ENCODE measurements at regions of chr19 and their contacts with region 1.

Region 1: GRCh38 chr19:3984908-3985642 is at the start of gene EEF2:
- DNase-seq: peak in 1 of 2 experiments; percentile 93
- H3K4me3 ChIP-seq: peak within 1 kb of the TSS; percentile 79 to 99 (median 98)
- H3K27ac ChIP-seq: peak within 1 kb of the TSS; percentile 84
- H3K4me1 ChIP-seq: peaks cover 2 to 16% (median 10%) of the 10 kb centered on the region in 4 experiments
- H3K27me3 ChIP-seq: no peaks in the 10 kb centered on the region
- CTCF ChIP-seq: no peak; a peak in 1 of 4 replicates
- EP300 ChIP-seq: peak in 1 of 2 experiments; percentile 24; a peak in 1 of 3 replicates
- POLR2A ChIP-seq: peak; percentile 100
- RAD21 ChIP-seq: no peak
- total RNA-seq, gene EEF2: 3,380 and 3,443 TPM in 2 replicates

Region 2: GRCh38 chr19:3880471-3881271 is 104.4 kb before region 1 on chr19 and contains the start of gene ATCAY:
- CTCF ChIA-PET with region 1: no interaction called
- POLR2A ChIA-PET with region 1: interaction called, 15 read pairs
- DNase-seq: peak in 1 of 2 experiments; percentile 71
- H3K4me3 ChIP-seq: peak within 1 kb of the TSS; percentile 55 to 79 (median 75)
- H3K27ac ChIP-seq: no peak within 1 kb of the TSS
- H3K4me1 ChIP-seq: peaks cover 0 to 4% (median 0%) of the 10 kb centered on the region in 4 experiments; a peak in 2 of 7 replicates
- H3K27me3 ChIP-seq: no peaks in the 10 kb centered on the region; a peak in 1 of 7 replicates
- CTCF ChIP-seq: no peak
- EP300 ChIP-seq: no peak
- POLR2A ChIP-seq: peak in 1 of 2 experiments; percentile 76; a peak in 1 of 3 replicates
- RAD21 ChIP-seq: no peak
- total RNA-seq, gene ATCAY: 31.6 and 33.8 TPM in 2 replicates

Region 3: GRCh38 chr19:3970808-3971598 is 14.1 kb before region 1 on chr19 and contains the start of gene DAPK3:
- CTCF ChIA-PET with region 1: interaction called, 10 read pairs
- POLR2A ChIA-PET with region 1: interaction called, 870 read pairs
- DNase-seq: peak; percentile 97 to 98
- H3K4me3 ChIP-seq: peak within 1 kb of the TSS; percentile 69 to 92 (median 75)
- H3K27ac ChIP-seq: peak within 1 kb of the TSS; percentile 78; the same call in 1 of the 2 replicates
- H3K4me1 ChIP-seq: peaks cover 2 to 14% (median 6%) of the 10 kb centered on the region in 4 experiments; a peak in 6 of 7 replicates
- H3K27me3 ChIP-seq: no peaks in the 10 kb centered on the region
- CTCF ChIP-seq: no peak
- EP300 ChIP-seq: no peak
- POLR2A ChIP-seq: peak; percentile 37 to 82
- RAD21 ChIP-seq: no peak
- total RNA-seq, gene DAPK3: 78.1 and 80.8 TPM in 2 replicates

Region 4: DNA sequence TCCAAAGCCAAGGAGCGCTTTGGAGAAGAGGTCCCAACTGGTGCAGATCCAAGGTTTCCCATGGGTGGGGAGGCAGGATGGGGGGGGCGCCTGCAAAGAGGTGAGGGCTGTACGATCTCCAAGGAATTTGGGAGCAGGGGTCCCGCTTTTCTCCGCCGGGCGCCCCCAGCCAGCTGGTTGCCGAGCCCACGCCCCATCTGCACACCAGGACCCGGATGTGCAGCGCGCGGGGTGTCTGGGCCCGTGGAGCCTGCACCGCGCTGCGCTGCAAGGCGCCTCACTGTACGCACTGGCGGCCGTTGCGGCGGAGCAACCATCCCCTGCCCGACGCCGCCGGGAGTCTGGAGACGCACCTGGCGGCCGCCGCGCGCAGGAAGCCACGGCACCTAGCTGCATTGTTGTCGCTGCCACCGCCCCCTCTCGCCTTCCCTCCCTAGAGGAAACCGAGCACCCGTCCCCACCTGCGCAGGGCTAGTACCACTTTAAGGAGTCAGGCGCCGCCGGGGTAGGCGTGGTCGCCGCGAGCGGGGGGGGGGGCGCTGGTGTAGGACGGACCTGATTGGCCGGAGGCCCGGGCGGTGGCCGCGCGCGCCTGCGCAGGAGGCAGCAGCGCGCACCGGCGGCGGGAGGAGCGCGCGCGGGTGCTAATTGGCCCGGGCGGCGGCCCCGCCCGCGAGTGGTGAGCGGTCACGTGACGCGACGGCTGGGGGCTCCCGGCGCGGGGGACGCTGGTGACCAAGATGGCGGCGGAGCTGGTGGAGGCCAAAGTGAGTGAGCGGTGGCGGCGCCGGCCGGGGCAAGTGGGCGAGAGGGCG is 22.2 kb after region 1 on chr19 and contains the start of gene PIAS4:
- CTCF ChIA-PET with region 1: interaction called, 21 read pairs
- POLR2A ChIA-PET with region 1: interaction called, 125 read pairs
- DNase-seq: peak; percentile 85 to 93
- H3K4me3 ChIP-seq: peak within 1 kb of the TSS; percentile 69 to 99 (median 92)
- H3K27ac ChIP-seq: peak within 1 kb of the TSS; percentile 83; the same call in 1 of the 2 replicates
- H3K4me1 ChIP-seq: peaks cover 2 to 12% (median 5%) of the 10 kb centered on the region in 4 experiments
- H3K27me3 ChIP-seq: no peaks in the 10 kb centered on the region
- CTCF ChIP-seq: no peak
- EP300 ChIP-seq: peak in 1 of 2 experiments; percentile 16; a peak in 1 of 3 replicates
- POLR2A ChIP-seq: peak in 1 of 2 experiments; percentile 75; a peak in 1 of 3 replicates
- RAD21 ChIP-seq: no peak; a peak in 1 of 4 replicates
- total RNA-seq, gene PIAS4: 41.4 and 51.4 TPM in 2 replicates

Region 5: DNA sequence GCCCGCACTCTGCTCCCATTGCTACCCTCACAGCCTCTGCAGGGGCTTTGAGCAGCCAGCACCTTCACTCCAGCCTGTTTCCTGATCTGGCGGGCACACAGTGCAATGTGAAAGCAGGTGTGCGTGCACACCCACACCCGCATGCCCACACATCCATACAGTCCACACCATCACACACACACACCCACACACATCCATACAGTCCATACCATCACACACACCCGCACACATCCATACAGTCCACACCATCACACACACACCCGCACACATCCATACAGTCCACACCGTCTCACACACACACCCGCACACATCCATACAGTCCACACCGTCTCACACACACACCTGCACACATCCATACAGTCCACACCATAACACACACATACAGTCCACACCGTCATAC is 50.5 kb after region 1 on chr19:
- CTCF ChIA-PET with region 1: no interaction called
- POLR2A ChIA-PET with region 1: interaction called, 11 read pairs
- DNase-seq: no peak
- H3K4me3 ChIP-seq: no peak overlapping the region
- H3K27ac ChIP-seq: no peak overlapping the region
- H3K4me1 ChIP-seq: no peaks in the 10 kb centered on the region
- H3K27me3 ChIP-seq: no peaks in the 10 kb centered on the region
- CTCF ChIP-seq: no peak
- EP300 ChIP-seq: no peak
- POLR2A ChIP-seq: no peak
- RAD21 ChIP-seq: no peak

Region 6: DNA sequence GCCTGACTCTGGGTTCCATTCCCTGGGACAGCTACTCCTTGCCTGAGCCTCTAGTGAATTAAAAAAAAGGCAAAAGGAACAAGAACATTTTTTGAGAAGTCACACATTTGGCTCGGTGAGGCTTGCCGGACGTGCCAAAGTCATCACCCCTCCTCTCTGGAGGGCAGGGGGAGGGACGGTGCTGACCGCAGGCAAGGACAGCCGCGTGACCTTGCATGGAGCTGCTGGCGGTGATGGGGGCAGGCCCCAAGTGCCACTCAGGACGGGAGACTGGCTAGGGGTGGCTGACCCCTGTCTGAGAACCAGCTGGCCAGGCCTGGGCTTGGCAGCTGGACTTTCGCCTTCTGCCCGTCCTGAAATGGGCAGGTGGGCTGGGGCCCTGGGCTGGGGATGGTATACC is 112.4 kb after region 1 on chr19:
- CTCF ChIA-PET with region 1: no interaction called
- POLR2A ChIA-PET with region 1: interaction called, 12 read pairs
- DNase-seq: no peak
- H3K4me3 ChIP-seq: no peak overlapping the region
- H3K27ac ChIP-seq: no peak overlapping the region
- H3K4me1 ChIP-seq: no peaks in the 10 kb centered on the region
- H3K27me3 ChIP-seq: no peaks in the 10 kb centered on the region
- CTCF ChIP-seq: no peak
- EP300 ChIP-seq: no peak
- POLR2A ChIP-seq: no peak
- RAD21 ChIP-seq: no peak

Measured in H1 (cell line).